B cell (primary cell): ENCODE measurements at regions of chr19 and their contacts with region 1.

Region 1: DNA sequence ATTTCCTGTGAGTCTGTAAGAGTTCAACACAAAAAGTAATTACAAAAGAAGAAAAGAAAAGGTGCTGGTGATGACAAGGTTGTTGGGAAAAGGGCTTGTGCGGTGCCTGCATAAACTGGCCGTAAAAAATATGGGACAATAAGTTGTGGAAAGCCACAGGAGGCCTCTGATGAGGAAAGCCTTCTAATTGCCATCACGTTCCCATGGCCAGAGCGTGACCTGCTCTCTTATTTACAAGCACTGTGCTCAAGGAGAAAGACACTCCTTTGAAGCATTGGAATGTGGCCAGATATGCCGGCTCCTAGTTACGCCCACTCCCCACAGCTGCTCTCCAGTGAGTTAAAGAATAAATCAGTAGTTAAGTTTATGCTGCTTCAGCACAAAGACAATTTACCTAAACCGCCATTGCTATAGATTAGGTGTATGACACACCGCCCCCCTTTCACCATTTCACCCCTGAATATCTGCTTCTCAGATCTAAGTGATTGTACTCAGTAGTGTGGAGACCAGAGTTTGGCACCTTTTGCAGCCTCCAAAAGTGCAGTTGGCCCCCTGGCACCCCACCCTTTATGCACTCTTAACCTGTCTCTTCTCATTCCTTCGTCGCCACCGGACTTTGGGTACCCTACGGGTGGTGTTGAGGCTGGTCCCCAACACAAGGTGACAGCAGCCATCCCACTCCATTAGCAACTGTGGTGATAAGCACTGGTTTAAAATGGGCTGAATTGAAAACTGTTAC is 8.1 kb upstream of the PGLYRP1 start:
- DNase-seq: no peak
- ATAC-seq: no peak
- H3K4me3 ChIP-seq: no peak overlapping the region
- H3K4me3 Mint-ChIP-seq: no peak overlapping the region
- H3K27ac ChIP-seq: no peak overlapping the region
- H3K27ac Mint-ChIP-seq: no peak overlapping the region
- H3K4me1 ChIP-seq: peaks cover 0 to 5% of the 10 kb centered on the region in 2 donors
- H3K4me1 Mint-ChIP-seq: peaks cover 2% of the 10 kb centered on the region
- H3K27me3 ChIP-seq: peaks cover 0 to 13% (median 5%) of the 10 kb centered on the region in 4 experiments
- H3K27me3 Mint-ChIP-seq: peaks cover 37% of the 10 kb centered on the region
- CTCF ChIP-seq: no peak

Region 2: GRCh38 chr19:45752639-45753038 is 278.3 kb before region 1 on chr19:
- CTCF ChIA-PET with region 1: no interaction called
- POLR2A ChIA-PET with region 1: no interaction called
- intact Hi-C with region 1: no loop called
- DNase-seq: no peak
- ATAC-seq: no peak
- H3K4me3 ChIP-seq: no peak overlapping the region
- H3K4me3 Mint-ChIP-seq: no peak overlapping the region
- H3K27ac ChIP-seq: no peak overlapping the region
- H3K27ac Mint-ChIP-seq: no peak overlapping the region
- H3K4me1 ChIP-seq: no peaks in the 10 kb centered on the region
- H3K4me1 Mint-ChIP-seq: no peaks in the 10 kb centered on the region
- H3K27me3 ChIP-seq: peaks cover 0 to 2% (median 0%) of the 10 kb centered on the region in 4 experiments
- H3K27me3 Mint-ChIP-seq: peaks cover 6% of the 10 kb centered on the region
- CTCF ChIP-seq: no peak

Region 3: DNA sequence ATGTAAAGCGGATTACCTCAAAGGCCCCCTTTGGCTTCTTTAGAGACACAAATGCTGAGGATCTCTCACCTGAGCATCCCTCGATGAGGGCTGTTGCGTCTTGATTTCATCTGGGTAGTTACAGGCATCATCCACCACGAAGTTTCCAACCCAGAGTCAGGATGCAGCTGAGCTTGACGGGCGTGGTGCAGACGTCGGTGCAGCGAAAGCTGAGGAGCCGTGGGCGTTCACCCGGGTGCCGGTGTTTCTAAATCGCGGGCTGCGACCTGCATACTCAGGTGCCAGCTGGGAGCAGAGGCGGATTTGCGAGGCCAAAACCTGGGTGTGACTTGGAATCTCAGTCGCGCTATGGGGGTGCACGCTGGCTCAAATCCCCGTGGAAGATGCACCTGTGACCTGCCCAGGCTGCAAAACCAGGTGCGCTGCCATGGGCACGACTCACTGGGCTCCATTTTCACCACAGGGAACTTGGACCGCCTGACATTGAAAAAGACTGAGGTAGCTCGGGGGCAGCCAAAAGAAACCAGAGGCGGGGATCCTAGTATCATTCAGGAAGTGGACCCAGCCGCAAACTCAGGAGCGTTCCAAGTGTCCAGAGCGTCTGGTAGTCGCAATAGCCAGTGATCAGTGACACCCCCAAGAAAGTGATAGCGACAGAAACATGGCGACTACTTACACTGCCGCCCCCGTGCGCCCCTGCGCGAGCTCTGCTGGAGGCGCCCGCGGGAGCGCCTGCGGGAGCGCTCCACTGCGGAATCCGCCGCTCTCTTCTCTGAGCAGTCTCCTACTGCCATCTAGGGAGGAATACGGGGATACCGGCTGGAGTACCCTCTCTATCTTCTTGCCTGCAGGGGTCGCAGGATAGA is 46.2 kb after region 1 on chr19:
- CTCF ChIA-PET with region 1: no interaction called
- POLR2A ChIA-PET with region 1: no interaction called
- intact Hi-C with region 1: no loop called
- DNase-seq: peak; percentile 19
- ATAC-seq: no peak
- H3K4me3 ChIP-seq: no peak overlapping the region
- H3K4me3 Mint-ChIP-seq: no peak overlapping the region
- H3K27ac ChIP-seq: no peak overlapping the region
- H3K27ac Mint-ChIP-seq: no peak overlapping the region
- H3K4me1 ChIP-seq: peaks cover 4 to 7% of the 10 kb centered on the region in 2 donors
- H3K4me1 Mint-ChIP-seq: no peaks in the 10 kb centered on the region
- H3K27me3 ChIP-seq: peaks cover 3 to 53% (median 47%) of the 10 kb centered on the region in 4 experiments
- H3K27me3 Mint-ChIP-seq: peaks cover 79% of the 10 kb centered on the region
- CTCF ChIP-seq: peak; percentile 10

Region 4: GRCh38 chr19:46186101-46187100 is 155.4 kb after region 1 on chr19:
- CTCF ChIA-PET with region 1: interaction called, 36 read pairs
- POLR2A ChIA-PET with region 1: no interaction called
- intact Hi-C with region 1: no loop called
- DNase-seq: no peak
- ATAC-seq: no peak
- H3K4me3 ChIP-seq: no peak overlapping the region
- H3K4me3 Mint-ChIP-seq: no peak overlapping the region
- H3K27ac ChIP-seq: no peak overlapping the region
- H3K27ac Mint-ChIP-seq: peak overlapping the region; percentile 50
- H3K4me1 ChIP-seq: peaks cover 6 to 8% of the 10 kb centered on the region in 2 donors
- H3K4me1 Mint-ChIP-seq: peaks cover 22% of the 10 kb centered on the region
- H3K27me3 ChIP-seq: peaks cover 0 to 26% (median 7%) of the 10 kb centered on the region in 4 experiments
- H3K27me3 Mint-ChIP-seq: peaks cover 33% of the 10 kb centered on the region
- CTCF ChIP-seq: no peak

Region 5: GRCh38 chr19:46265217-46265828 is 234.3 kb after region 1 on chr19:
- CTCF ChIA-PET with region 1: interaction called, 62 read pairs
- POLR2A ChIA-PET with region 1: no interaction called
- intact Hi-C with region 1: no loop called
- DNase-seq: peak; percentile 78
- ATAC-seq: peak; percentile 43
- H3K4me3 ChIP-seq: no peak overlapping the region
- H3K4me3 Mint-ChIP-seq: no peak overlapping the region
- H3K27ac ChIP-seq: no peak overlapping the region
- H3K27ac Mint-ChIP-seq: no peak overlapping the region
- H3K4me1 ChIP-seq: peaks cover 0 to 5% of the 10 kb centered on the region in 2 donors
- H3K4me1 Mint-ChIP-seq: peaks cover 7% of the 10 kb centered on the region
- H3K27me3 ChIP-seq: peaks cover 0 to 12% (median 3%) of the 10 kb centered on the region in 4 experiments
- H3K27me3 Mint-ChIP-seq: peaks cover 35% of the 10 kb centered on the region
- CTCF ChIP-seq: peak; percentile 91